ENCODE measurements at regions of chr1 and their contacts with region 1.

Region 1: DNA sequence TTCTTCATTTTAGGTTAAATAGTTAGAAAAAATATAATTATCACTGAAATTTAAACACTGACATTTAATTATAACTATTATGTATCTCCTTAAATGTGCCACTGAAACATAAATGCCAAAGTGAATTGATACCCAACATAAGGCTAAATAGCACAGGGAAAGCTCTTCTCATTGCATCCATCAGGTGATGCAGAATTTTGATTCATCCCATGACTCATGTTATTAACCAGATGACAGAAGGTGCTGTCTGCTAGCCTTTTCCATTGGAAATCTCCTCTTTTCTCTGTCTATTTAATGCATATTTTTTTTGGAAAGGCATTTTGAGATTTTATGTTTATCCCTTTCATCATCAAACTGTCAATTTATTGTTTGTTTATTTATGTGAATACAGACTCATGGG is 136.8 kb downstream of the KCNK2 start:
- DNase-seq: peak; percentile 6
- ATAC-seq: no peak
- H3K4me3 ChIP-seq: no peak overlapping the region
- H3K27ac ChIP-seq: no peak overlapping the region
- H3K4me1 ChIP-seq: no peaks in the 10 kb centered on the region
- H3K27me3 ChIP-seq: no peaks in the 10 kb centered on the region
- CTCF ChIP-seq: no peak
- POLR2A ChIP-seq: no peak
- RAD21 ChIP-seq: no peak

Region 2: GRCh38 chr1:215243345-215244054 is 24.1 kb after region 1 on chr1:
- CTCF ChIA-PET with region 1: no interaction called
- POLR2A ChIA-PET with region 1: no interaction called
- dilution Hi-C with region 1: no loop called
- in situ Hi-C with region 1: no loop called
- intact Hi-C with region 1: loop called (anchors 2 kb)
- DNase-seq: peak; percentile 2
- ATAC-seq: no peak
- H3K4me3 ChIP-seq: no peak overlapping the region
- H3K27ac ChIP-seq: no peak overlapping the region
- H3K4me1 ChIP-seq: no peaks in the 10 kb centered on the region
- H3K27me3 ChIP-seq: no peaks in the 10 kb centered on the region
- CTCF ChIP-seq: no peak
- POLR2A ChIP-seq: no peak
- RAD21 ChIP-seq: no peak

Measured in IMR-90 (cell line).